CD14-positive monocyte (primary cell): ENCODE measurements at regions of chr3 and their contacts with region 1.

Region 1: DNA sequence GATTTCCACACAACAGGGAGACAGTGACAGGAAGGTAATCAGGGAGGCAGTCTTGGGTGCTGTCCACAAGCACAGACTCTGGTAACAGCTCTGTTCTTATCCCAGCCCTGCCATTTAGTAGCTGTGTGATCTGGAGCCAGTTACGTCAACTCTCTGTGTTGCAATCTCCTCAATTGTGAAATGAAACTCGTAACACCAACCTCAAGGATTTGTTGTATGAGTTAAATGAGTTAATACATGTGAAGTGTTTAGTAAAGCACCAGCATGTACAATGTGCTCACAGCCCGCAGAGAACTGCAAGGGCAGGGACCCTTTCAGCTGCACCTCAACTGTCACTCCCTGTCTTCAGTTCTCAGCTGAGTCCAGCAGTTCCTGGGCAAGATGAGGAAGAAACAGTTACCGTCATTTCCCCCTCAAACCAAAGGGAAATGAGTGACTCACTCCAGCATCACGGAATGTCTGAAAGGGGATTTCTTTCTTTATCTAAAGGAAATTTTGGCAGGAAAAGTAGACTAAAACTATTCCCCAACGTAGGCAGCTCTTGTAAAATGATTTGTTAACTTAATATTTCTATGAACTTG is 39.9 kb upstream of the MB21D2 start:
- DNase-seq: peak; percentile 93 to 98 (median 93)
- H3K4me3 ChIP-seq: peak overlapping the region; percentile 26 to 55 (median 54)
- H3K4me3 Mint-ChIP-seq: peak overlapping the region; percentile 68 to 88
- H3K27ac ChIP-seq: peak overlapping the region; percentile 83 to 93
- H3K27ac Mint-ChIP-seq: peak overlapping the region; percentile 96 to 100 (median 98)
- H3K4me1 ChIP-seq: peaks cover 17 to 23% of the 10 kb centered on the region in 2 donors
- H3K4me1 Mint-ChIP-seq: peaks cover 21% of the 10 kb centered on the region
- H3K27me3 ChIP-seq: no peaks in the 10 kb centered on the region
- H3K27me3 Mint-ChIP-seq: no peaks in the 10 kb centered on the region
- CTCF ChIP-seq: no peak

Region 2: GRCh38 chr3:192892981-192893700 is 64.4 kb before region 1 on chr3:
- intact Hi-C with region 1: loop called (anchors 5 to 10 kb)
- DNase-seq: peak; percentile 92 to 99 (median 95)
- H3K4me3 ChIP-seq: peak overlapping the region; percentile 25 to 64 (median 38)
- H3K4me3 Mint-ChIP-seq: peak overlapping the region; percentile 35 to 87
- H3K27ac ChIP-seq: peak overlapping the region; percentile 71 to 87
- H3K27ac Mint-ChIP-seq: peak overlapping the region; percentile 89 to 98 (median 95)
- H3K4me1 ChIP-seq: peaks cover 15 to 18% of the 10 kb centered on the region in 2 donors
- H3K4me1 Mint-ChIP-seq: peaks cover 16% of the 10 kb centered on the region
- H3K27me3 ChIP-seq: peaks cover 4 to 8% of the 10 kb centered on the region in 2 donors
- H3K27me3 Mint-ChIP-seq: peaks cover 5 to 20% (median 19%) of the 10 kb centered on the region in 3 donors
- CTCF ChIP-seq: no peak

Region 3: DNA sequence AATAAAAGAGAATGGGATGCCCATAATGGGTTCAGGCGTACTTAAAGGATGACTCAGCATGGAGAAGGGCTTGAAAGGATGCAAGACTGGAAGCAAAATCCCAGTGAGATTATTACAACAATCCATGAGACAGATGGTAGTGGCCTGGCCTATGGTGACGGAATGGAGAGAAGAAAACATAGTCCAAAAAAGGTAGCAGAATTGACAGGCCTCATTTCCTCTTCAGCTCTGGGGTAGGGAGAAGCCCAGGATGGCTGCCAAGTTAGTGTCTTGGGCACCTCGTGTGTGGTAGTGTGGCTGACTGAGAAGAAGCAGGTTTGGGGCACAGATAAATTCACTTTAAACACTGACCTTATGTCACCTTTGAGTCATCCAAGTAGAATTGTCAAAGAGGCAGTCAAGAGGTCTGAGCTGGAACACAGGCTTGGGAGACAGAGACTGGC is 58.0 kb before region 1 on chr3:
- intact Hi-C with region 1: loop called (anchors 5 to 10 kb)
- DNase-seq: peak in 1 of 3 donors; percentile 59
- H3K4me3 ChIP-seq: no peak overlapping the region
- H3K4me3 Mint-ChIP-seq: no peak overlapping the region
- H3K27ac ChIP-seq: no peak overlapping the region
- H3K27ac Mint-ChIP-seq: peak overlapping the region in 1 of 7 donors; percentile 23
- H3K4me1 ChIP-seq: peaks cover 6 to 10% of the 10 kb centered on the region in 2 donors
- H3K4me1 Mint-ChIP-seq: peaks cover 9% of the 10 kb centered on the region
- H3K27me3 ChIP-seq: no peaks in the 10 kb centered on the region
- H3K27me3 Mint-ChIP-seq: peaks cover 7 to 17% (median 16%) of the 10 kb centered on the region in 3 donors
- CTCF ChIP-seq: no peak

Region 4: GRCh38 chr3:193564012-193564411 is 606.5 kb after region 1 on chr3:
- intact Hi-C with region 1: no loop called
- DNase-seq: no peak
- H3K4me3 ChIP-seq: no peak overlapping the region
- H3K4me3 Mint-ChIP-seq: no peak overlapping the region
- H3K27ac ChIP-seq: no peak overlapping the region
- H3K27ac Mint-ChIP-seq: peak overlapping the region in 1 of 7 donors; percentile 61
- H3K4me1 ChIP-seq: no peaks in the 10 kb centered on the region
- H3K4me1 Mint-ChIP-seq: peaks cover 2% of the 10 kb centered on the region
- H3K27me3 ChIP-seq: no peaks in the 10 kb centered on the region
- H3K27me3 Mint-ChIP-seq: peaks cover 2 to 4% (median 3%) of the 10 kb centered on the region in 3 donors
- CTCF ChIP-seq: no peak